ENCODE measurements at regions of chr10 and their contacts with region 1.

Region 1: DNA sequence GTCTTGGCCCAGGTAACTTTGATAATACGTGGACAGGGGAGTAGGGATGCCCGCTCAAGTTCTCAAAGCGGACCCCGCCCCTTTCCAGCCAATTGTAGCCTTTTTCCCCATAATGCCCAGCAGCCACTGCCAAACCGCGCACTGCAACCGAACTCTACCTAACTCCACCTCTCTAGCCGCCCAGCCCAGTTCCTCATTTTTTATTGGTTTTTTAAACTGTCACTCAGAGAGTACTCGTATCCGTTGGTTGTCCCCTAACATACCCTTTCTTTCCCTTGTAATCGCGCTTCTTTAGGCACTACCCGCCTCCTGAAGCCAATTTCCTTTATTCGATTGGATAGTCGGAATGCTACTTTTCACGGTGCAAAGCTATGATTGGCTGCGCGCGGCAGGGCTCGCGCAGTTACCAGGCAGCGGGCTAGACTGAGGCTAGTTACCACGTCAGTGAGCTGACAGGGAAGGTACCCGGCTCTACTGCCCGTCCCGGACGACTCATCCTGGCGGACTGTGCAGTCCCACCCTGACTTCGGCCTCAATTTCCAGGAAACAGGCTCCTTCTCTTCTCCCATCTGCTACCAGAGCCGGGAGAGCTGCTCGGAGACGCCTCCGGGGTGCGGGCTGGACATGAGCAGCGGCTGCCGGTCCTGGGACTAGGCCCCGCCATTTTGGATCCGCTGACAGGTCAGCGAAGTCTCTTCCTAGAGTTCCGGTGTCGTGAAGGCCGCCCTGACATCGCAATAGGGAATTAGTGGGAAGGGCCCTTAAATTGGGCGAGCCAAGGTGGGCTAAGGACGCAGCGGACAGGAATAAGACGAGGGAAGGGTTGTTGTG is at the start of gene GBF1:
- DNase-seq: peak; percentile 95 to 98 (median 96)
- H3K4me3 ChIP-seq: peak within 1 kb of the TSS; percentile 51 to 94
- H3K4me3 Mint-ChIP-seq: peak within 1 kb of the TSS; percentile 84 to 99 (median 98)
- H3K27ac ChIP-seq: peak within 1 kb of the TSS; percentile 96
- H3K27ac Mint-ChIP-seq: peak within 1 kb of the TSS; percentile 89 to 98 (median 97)
- H3K4me1 ChIP-seq: peaks cover 64% of the 10 kb centered on the region
- H3K4me1 Mint-ChIP-seq: peaks cover 38 to 66% (median 50%) of the 10 kb centered on the region in 4 donors
- H3K27me3 ChIP-seq: peaks cover 6% of the 10 kb centered on the region
- H3K27me3 Mint-ChIP-seq: peaks cover 3 to 16% of the 10 kb centered on the region in 2 donors
- total RNA-seq, gene GBF1: 39.6 to 44.7 TPM

Region 2: DNA sequence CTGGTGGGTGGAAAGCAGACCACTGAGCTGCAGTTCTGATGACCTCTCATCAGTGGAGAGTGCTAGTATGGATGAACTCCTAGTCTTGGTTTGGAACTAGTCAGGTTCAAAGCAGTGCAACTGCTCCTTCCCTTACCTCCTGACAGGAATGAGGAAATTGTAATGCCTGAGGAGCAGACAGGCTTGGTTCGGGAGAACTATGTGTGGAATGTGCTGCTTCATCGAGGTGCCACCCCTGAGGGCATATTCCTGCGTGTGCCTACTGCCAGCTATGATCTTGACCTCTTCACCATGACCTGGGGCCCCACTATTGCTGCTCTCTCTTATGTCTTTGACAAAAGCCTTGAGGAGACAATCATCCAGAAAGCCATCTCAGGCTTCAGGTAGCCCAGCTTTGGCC is 122.8 kb after region 1 on chr10:
- CTCF ChIA-PET with region 1: no interaction called
- POLR2A ChIA-PET with region 1: no interaction called
- intact Hi-C with region 1: no loop called
- DNase-seq: no peak
- H3K4me3 ChIP-seq: no peak overlapping the region
- H3K4me3 Mint-ChIP-seq: no peak overlapping the region
- H3K27ac ChIP-seq: no peak overlapping the region
- H3K27ac Mint-ChIP-seq: peak overlapping the region in 3 of 7 donors; percentile 10 to 60 (median 35)
- H3K4me1 ChIP-seq: no peaks in the 10 kb centered on the region
- H3K4me1 Mint-ChIP-seq: no peaks in the 10 kb centered on the region
- H3K27me3 ChIP-seq: no peaks in the 10 kb centered on the region
- H3K27me3 Mint-ChIP-seq: no peaks in the 10 kb centered on the region

Region 3: GRCh38 chr10:102461187-102462054 is 216.1 kb after region 1 on chr10:
- CTCF ChIA-PET with region 1: no interaction called
- POLR2A ChIA-PET with region 1: no interaction called
- intact Hi-C with region 1: loop called (anchors 1 kb)
- DNase-seq: peak; percentile 90 to 91 (median 91)
- H3K4me3 ChIP-seq: peak overlapping the region; percentile 52 to 85
- H3K4me3 Mint-ChIP-seq: peak overlapping the region; percentile 83 to 95 (median 90)
- H3K27ac ChIP-seq: peak overlapping the region; percentile 70
- H3K27ac Mint-ChIP-seq: peak overlapping the region; percentile 75 to 95 (median 87)
- H3K4me1 ChIP-seq: peaks cover 16% of the 10 kb centered on the region
- H3K4me1 Mint-ChIP-seq: peaks cover 16 to 38% (median 23%) of the 10 kb centered on the region in 4 donors
- H3K27me3 ChIP-seq: no peaks in the 10 kb centered on the region
- H3K27me3 Mint-ChIP-seq: no peaks in the 10 kb centered on the region

Measured in CD4-positive, alpha-beta memory T cell (primary cell).